WTC11 (cell line): ENCODE measurements at regions of chr3 and their contacts with region 1.

Region 1: GRCh38 chr3:12719984-12720898 is 38.8 kb downstream of the TMEM40 start:
- DNase-seq: peak; percentile 75
- ATAC-seq: peak; percentile 95
- H3K4me3 Mint-ChIP-seq: no peak overlapping the region
- H3K27ac Mint-ChIP-seq: no peak overlapping the region
- H3K4me1 Mint-ChIP-seq: no peaks in the 10 kb centered on the region; the same call in 1 of the 2 replicates
- H3K27me3 Mint-ChIP-seq: no peaks in the 10 kb centered on the region; the same call in none of the 2 replicates
- CTCF ChIP-seq: peak; percentile 80

Region 2: DNA sequence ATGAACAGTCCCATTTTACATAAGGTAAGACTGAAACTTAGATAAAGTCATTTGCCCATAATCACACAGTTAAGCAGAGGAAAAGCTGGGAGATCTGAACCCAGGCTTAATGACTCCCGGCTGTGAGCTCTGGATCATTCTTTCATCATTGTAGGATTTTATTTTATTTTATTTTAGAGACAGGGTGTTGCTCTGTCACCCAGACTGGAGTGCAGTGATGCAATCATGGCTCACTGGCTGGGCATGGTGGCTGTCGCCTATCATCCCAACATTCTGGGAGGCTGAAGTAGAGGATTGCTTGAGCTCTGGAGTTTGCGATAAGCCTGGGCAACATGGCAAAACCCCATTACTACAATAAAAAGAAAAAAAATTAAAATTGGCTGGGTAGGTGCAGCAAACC is 25.1 kb before region 1 on chr3:
- CTCF ChIA-PET with region 1: interaction called, 10 read pairs
- POLR2A ChIA-PET with region 1: no interaction called
- DNase-seq: no peak
- ATAC-seq: no peak
- H3K4me3 Mint-ChIP-seq: no peak overlapping the region
- H3K27ac Mint-ChIP-seq: no peak overlapping the region
- H3K4me1 Mint-ChIP-seq: peaks cover 10% of the 10 kb centered on the region
- H3K27me3 Mint-ChIP-seq: no peaks in the 10 kb centered on the region
- CTCF ChIP-seq: no peak

Region 3: DNA sequence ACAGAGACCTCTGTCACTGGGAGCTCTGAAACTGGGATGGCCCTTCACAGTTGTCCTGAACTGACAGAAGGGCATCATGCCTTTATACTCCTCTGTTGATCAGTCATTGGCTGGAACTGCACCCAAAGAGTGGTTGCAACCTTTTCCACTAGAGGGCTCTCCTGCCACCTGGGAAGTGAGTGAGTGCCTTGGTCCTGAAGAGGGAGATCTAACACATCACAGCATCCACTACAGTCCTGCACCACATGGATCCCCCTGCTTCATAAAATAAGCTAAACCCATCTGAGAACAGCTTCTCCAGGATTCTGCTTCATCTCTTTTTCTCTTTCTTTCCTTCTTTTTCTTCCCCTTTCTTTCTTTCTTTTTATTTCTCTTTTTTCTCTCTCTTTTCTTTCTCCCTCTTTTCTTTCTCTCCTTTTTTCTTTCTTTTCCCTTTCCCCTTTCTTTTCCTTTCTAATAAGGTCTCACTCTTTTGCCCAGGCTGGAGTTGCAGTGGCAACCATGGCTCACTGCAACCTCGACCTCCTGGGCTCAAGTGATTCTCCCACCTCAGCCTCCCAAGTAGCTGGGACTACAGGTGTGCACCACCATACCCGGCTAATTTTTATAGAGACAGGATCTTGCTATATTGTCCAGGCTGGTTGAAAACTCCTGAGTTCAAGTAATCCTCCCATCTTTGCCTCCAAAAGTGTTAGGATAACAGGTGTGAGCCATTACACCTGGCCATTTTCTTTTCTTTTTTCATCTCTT is 13.6 kb before region 1 on chr3:
- CTCF ChIA-PET with region 1: interaction called, 18 read pairs
- POLR2A ChIA-PET with region 1: no interaction called
- DNase-seq: peak; percentile 78
- ATAC-seq: peak; percentile 99
- H3K4me3 Mint-ChIP-seq: no peak overlapping the region
- H3K27ac Mint-ChIP-seq: no peak overlapping the region
- H3K4me1 Mint-ChIP-seq: no peaks in the 10 kb centered on the region
- H3K27me3 Mint-ChIP-seq: no peaks in the 10 kb centered on the region
- CTCF ChIP-seq: peak; percentile 44; the same call in 1 of the 2 replicates